OCI-LY7 (cell line): ENCODE measurements at regions of chr14 and their contacts with region 1.

Region 1: DNA sequence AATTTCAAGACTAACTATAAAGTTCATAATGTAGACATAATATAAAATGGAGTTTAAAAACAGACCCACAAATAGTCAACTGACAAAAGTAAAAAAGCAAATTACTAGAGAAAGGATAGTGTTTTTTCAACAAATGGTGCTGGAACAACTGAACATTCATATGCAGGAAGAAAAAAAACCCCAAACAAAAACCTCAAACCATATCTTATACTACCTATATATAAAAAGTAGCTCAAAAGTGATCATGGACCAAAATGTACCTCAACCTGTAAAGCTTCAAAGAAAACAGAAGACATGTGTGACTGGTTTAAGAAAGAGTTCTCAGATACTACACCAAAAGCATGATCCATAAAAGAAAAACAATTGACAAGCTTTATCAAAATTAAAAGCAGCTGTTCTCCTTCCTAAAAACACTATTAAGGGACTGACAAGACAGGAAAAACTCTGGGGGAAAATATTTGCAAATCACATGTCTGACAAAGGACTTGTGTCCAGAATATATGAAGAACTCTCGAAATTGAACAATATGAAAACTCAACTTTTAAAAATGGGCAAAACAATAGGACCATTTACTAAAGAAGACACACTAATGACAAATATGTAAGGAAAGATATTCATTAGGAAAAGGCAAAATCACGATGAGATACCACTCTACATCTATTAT is 22.7 kb upstream of the ARID4A start:
- DNase-seq: no peak
- H3K4me3 ChIP-seq: no peak overlapping the region
- H3K27ac ChIP-seq: no peak overlapping the region
- H3K4me1 ChIP-seq: no peaks in the 10 kb centered on the region
- CTCF ChIP-seq: no peak

Region 2: DNA sequence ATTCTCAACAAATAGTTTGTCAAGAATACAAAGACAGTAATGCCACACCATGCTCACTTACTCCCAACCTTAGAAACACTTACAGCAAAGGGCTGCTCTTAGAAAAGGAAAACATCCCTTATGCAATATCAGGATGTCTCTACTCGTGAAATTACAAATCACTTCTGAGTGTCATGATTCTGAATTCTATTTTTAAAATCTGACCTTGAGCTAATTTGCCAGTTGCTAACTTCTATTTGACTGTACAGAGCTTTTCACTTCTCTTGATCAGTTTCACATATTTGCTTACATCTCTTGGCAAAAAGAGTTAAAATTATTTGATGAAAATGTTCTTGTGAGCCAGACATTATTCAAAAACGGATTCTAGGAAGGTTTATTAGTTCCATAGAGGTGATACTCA is 273.0 kb before region 1 on chr14:
- CTCF ChIA-PET with region 1: no interaction called
- POLR2A ChIA-PET with region 1: no interaction called
- intact Hi-C with region 1: no loop called
- DNase-seq: no peak
- H3K4me3 ChIP-seq: no peak overlapping the region
- H3K27ac ChIP-seq: no peak overlapping the region
- H3K4me1 ChIP-seq: no peaks in the 10 kb centered on the region
- CTCF ChIP-seq: no peak

Region 3: DNA sequence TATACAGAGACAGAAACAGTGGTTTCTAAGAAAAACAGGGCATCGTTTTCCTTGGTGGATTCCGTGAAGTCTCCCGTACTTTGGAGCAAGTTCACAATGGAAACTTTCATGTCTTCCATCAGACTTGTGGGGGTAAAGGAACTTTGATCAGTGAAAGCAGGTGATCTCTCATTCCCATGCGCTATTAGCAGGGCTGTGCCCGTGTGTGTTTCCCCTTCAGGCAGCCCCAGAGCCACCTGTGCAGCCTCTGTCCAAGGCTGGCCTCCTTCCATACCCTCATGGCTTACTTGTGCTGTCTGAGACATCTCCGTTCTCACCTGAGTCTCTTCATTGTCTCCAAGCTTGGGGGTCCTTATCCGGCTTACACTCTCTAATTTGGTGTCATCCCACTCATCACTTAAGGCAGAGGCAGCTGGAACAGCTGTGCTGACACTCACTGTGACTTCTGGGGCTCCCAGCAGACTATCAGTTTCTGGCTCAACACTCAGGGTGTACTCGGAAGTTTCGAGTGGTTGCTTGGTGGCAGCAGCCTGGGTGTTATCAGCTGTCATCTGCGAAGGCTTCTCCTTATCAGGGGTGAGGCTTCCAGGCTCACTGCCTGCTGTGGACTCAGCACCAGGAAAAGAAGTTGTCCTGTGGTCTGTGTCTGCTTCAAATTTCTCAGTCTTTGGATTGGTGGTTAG is 137.5 kb before region 1 on chr14:
- CTCF ChIA-PET with region 1: no interaction called
- POLR2A ChIA-PET with region 1: no interaction called
- intact Hi-C with region 1: no loop called
- DNase-seq: no peak
- H3K4me3 ChIP-seq: no peak overlapping the region
- H3K27ac ChIP-seq: no peak overlapping the region
- H3K4me1 ChIP-seq: no peaks in the 10 kb centered on the region
- CTCF ChIP-seq: no peak

Region 4: DNA sequence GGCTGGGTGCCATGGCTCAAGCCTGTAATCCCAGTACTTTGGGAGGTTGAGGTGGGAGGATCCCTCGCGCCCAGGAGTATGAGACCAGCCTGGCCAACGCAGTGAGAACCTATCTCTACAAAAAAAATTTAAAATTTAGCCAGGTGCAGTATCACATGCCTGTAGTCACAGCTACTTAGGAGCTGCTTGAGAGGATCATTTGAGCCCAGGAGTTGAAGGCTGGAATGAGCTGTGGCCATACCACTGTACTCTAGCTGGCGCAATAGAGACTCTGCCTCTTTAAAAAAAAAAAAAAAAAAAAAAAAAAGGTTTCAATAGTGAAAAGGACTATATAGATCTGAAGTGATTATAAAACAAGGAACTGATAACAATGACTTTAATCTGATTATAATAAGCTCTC is 17.5 kb before region 1 on chr14:
- CTCF ChIA-PET with region 1: no interaction called
- POLR2A ChIA-PET with region 1: interaction called, 12 read pairs
- intact Hi-C with region 1: no loop called
- DNase-seq: no peak
- H3K4me3 ChIP-seq: no peak overlapping the region
- H3K27ac ChIP-seq: no peak overlapping the region
- H3K4me1 ChIP-seq: no peaks in the 10 kb centered on the region
- CTCF ChIP-seq: no peak

Region 5: DNA sequence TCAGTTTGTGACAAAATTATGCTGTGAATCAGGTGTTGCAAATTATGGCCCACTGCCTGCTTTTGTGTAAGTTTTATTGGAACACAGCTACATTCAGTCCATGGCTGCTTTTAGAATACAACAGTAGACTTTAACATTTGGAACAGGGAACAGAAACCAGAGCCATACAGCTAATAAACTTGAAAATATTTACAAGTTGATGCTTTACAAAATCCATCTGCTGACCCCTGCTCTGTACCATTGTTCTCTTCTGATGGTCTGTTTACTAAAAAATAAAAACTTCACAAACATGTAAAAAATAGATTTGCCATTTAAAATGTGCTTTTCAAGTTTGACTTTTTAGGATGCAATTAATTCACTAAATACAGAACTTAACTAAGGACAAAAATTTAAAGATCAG is 10.3 kb before region 1 on chr14:
- CTCF ChIA-PET with region 1: no interaction called
- POLR2A ChIA-PET with region 1: interaction called, 10 read pairs
- intact Hi-C with region 1: no loop called
- DNase-seq: no peak
- H3K4me3 ChIP-seq: no peak overlapping the region
- H3K27ac ChIP-seq: no peak overlapping the region
- H3K4me1 ChIP-seq: no peaks in the 10 kb centered on the region
- CTCF ChIP-seq: no peak

Region 6: GRCh38 chr14:58488550-58488949 is 212.9 kb after region 1 on chr14:
- CTCF ChIA-PET with region 1: no interaction called
- POLR2A ChIA-PET with region 1: no interaction called
- intact Hi-C with region 1: no loop called
- DNase-seq: no peak
- H3K4me3 ChIP-seq: no peak overlapping the region
- H3K27ac ChIP-seq: no peak overlapping the region
- H3K4me1 ChIP-seq: peaks cover 7% of the 10 kb centered on the region
- CTCF ChIP-seq: no peak